ENCODE measurements at regions of chr3 and their contacts with region 1.

Region 1: DNA sequence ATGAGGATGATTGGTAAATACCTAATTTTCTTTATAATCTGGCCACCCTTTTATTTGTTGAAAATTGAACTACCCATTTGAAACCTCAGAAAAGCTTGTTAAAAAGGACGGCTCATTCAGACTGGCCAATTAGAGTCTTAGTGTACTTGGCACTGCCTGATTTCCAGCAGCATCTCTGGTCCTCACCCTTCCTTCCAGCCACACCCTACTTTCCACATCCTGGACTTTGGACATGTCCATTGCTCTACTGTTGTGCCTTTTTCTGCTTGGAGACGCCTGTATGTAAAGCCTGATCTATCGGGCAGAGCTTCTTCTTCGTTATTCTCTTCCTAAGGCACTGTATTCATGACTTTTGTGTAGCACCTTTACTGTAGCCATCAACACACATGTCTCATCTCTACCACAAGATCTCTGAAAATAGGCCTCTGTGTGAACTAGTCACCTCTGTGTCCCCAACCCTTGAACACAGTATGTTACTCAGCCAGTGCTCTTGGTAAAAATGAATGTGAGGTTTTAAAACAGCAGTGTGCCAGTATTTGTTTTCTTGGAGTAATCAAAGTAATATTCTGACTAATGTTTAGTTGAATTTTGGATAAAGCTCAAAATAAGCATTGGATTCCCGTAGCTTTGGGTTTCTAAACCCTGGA is 6.8 kb downstream of the RBM5 start:
- DNase-seq: no peak

Region 2: GRCh38 chr3:49939858-49940666 is 155.4 kb before region 1 on chr3 and contains the start of gene RBM6:
- intact Hi-C with region 1: loop called (anchors 10 kb)
- DNase-seq: peak; percentile 98 to 100 (median 100)

Region 3: DNA sequence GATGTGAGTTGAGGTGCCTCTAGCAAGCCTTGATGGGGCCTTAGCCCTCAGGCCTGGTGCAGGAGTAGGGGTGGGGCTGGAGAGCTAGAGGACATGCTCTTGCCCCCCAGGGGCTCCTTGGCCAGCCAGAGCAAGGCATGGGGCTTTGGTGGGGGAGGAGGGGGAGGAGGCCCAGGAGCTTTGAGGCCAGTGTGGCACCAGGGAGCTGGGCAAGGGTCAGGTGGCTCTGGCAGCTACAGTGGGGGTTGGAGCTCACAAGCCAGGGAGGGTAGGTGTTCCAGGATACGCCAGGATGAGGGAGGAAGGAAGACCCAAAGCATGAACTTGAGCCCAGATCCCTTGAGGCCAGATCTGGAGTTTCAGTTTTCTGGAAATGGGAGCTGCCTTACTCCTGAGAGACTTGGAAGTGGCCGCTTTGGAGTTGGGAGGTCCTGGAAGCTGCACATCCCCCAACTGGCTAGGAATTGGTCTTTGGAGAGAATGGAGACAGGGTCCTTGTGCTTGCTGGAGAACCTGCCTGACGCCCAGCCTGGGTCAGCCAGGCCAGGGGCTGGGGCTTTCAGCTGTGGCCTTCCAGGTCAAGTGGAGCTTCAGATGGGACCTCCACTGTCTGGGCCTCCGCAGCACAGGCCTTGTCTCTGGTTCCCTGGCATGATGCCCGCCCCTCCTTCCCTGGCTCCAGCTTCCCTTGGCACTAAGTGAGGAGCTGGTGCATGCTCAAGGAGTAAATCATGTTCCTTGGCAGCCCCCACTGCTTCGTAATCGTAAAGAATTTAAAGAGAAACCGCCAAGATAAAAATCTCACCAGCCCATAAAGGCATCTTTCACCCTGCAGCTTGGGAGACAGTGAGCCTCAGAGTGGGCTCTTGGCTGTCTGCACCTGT is 68.3 kb after region 1 on chr3:
- intact Hi-C with region 1: no loop called
- DNase-seq: peak in 30 of 42 donors; percentile 10 to 74 (median 42)

Measured in head of caudate nucleus (tissue), 42 donors.